ENCODE measurements at regions of chr4 and their contacts with region 1.

Region 1: GRCh38 chr4:10671366-10671765 is 13.2 kb downstream of the CLNK start:
- DNase-seq: no peak
- H3K4me3 Mint-ChIP-seq: no peak overlapping the region
- H3K27ac Mint-ChIP-seq: peak overlapping the region; percentile 18
- H3K4me1 Mint-ChIP-seq: peaks cover 6% of the 10 kb centered on the region
- H3K27me3 Mint-ChIP-seq: no peaks in the 10 kb centered on the region

Region 2: DNA sequence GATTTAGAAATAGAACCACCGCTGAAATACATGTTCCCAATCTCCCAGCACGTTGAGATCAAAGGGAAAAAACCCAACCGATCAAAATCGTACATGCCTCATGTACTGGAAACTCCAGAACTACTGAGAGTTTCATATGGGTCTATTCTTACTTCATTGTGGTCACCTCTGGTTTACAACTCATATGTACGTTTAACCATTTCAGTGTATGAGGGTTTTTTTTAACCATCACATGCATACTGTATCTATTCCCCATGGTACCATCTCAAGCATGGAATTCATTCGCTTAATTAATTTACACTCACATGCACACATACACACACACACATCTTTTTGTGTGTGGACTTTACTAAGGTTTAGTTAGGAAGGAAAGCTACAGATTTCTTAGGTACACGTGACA is 59.2 kb after region 1 on chr4:
- CTCF ChIA-PET with region 1: no interaction called
- POLR2A ChIA-PET with region 1: no interaction called
- intact Hi-C with region 1: loop called (anchors 5 kb)
- DNase-seq: no peak
- H3K4me3 Mint-ChIP-seq: no peak overlapping the region
- H3K27ac Mint-ChIP-seq: peak overlapping the region; percentile 43
- H3K4me1 Mint-ChIP-seq: peaks cover 39% of the 10 kb centered on the region
- H3K27me3 Mint-ChIP-seq: peaks cover 7% of the 10 kb centered on the region